ENCODE measurements at regions of chr17 and their contacts with region 1.

Region 1: GRCh38 chr17:50200457-50201275 is 765 bp downstream of the COL1A1 start:
- DNase-seq: peak; percentile 91
- ATAC-seq: peak; percentile 81
- H3K4me3 Mint-ChIP-seq: peak overlapping the region; percentile 53
- H3K27ac Mint-ChIP-seq: no peak overlapping the region
- H3K4me1 Mint-ChIP-seq: peaks cover 16% of the 10 kb centered on the region
- H3K27me3 Mint-ChIP-seq: peaks cover 43% of the 10 kb centered on the region

Region 2: GRCh38 chr17:50114849-50115357 is 85.8 kb before region 1 on chr17:
- CTCF ChIA-PET with region 1: interaction called, 7 read pairs
- POLR2A ChIA-PET with region 1: interaction called, 3 read pairs
- intact Hi-C with region 1: loop called in 1 of 2 experiments (anchors 1 kb)
- DNase-seq: peak; percentile 65
- ATAC-seq: peak; percentile 76
- H3K4me3 Mint-ChIP-seq: no peak overlapping the region
- H3K27ac Mint-ChIP-seq: no peak overlapping the region
- H3K4me1 Mint-ChIP-seq: peaks cover 7% of the 10 kb centered on the region
- H3K27me3 Mint-ChIP-seq: peaks cover 31% of the 10 kb centered on the region

Region 3: DNA sequence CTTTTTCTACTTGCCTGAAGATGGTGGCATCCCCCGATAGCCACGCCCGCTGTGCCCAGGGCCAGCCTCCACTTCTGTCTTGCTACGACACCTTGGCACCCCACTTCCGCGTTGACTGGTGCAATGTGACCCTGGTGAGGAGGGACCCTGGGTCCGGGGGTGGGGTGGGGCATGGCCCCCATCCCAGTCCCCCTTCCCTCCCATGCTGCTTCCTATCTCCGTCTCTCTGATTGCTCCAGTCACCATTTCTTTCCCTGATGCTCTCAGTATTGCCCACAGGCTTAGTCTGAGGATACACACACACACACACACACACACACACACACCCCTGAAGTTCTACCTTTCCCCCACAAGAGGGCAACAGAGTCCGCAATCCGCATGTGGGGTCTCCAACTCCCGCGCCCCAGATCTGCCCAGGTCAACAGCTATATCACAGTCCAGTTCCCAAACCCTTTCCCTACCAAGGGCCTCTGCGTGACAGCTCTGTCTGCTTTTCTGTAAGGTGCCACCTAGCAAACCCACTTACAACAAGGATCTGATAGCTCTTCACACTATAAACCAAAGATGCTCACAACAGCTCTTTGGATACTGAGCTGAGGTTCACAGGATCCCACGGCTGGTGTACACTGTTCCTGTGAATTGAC is 31.4 kb before region 1 on chr17:
- CTCF ChIA-PET with region 1: interaction called, 22 read pairs
- POLR2A ChIA-PET with region 1: no interaction called
- intact Hi-C with region 1: loop called (anchors 1 kb)
- DNase-seq: peak; percentile 66
- ATAC-seq: peak; percentile 77
- H3K4me3 Mint-ChIP-seq: peak overlapping the region; percentile 11
- H3K27ac Mint-ChIP-seq: peak overlapping the region; percentile 11
- H3K4me1 Mint-ChIP-seq: peaks cover 9% of the 10 kb centered on the region
- H3K27me3 Mint-ChIP-seq: no peaks in the 10 kb centered on the region

Region 4: GRCh38 chr17:50269477-50270434 is 69.1 kb after region 1 on chr17:
- CTCF ChIA-PET with region 1: interaction called, 50 read pairs
- POLR2A ChIA-PET with region 1: no interaction called
- intact Hi-C with region 1: loop called (anchors 1 kb)
- DNase-seq: peak; percentile 86
- ATAC-seq: peak; percentile 97
- H3K4me3 Mint-ChIP-seq: no peak overlapping the region
- H3K27ac Mint-ChIP-seq: no peak overlapping the region
- H3K4me1 Mint-ChIP-seq: peaks cover 5% of the 10 kb centered on the region
- H3K27me3 Mint-ChIP-seq: peaks cover 16% of the 10 kb centered on the region

Region 5: GRCh38 chr17:50297407-50297865 is 96.8 kb after region 1 on chr17:
- CTCF ChIA-PET with region 1: interaction called, 200 read pairs
- POLR2A ChIA-PET with region 1: no interaction called
- intact Hi-C with region 1: loop called (anchors 1 kb)
- DNase-seq: peak; percentile 91
- ATAC-seq: peak; percentile 99
- H3K4me3 Mint-ChIP-seq: no peak overlapping the region
- H3K27ac Mint-ChIP-seq: no peak overlapping the region
- H3K4me1 Mint-ChIP-seq: no peaks in the 10 kb centered on the region
- H3K27me3 Mint-ChIP-seq: peaks cover 3% of the 10 kb centered on the region

Region 6: GRCh38 chr17:50331085-50331791 is 130.6 kb after region 1 on chr17:
- CTCF ChIA-PET with region 1: interaction called, 4 read pairs
- POLR2A ChIA-PET with region 1: no interaction called
- intact Hi-C with region 1: loop called in 1 of 2 experiments (anchors 1 kb)
- DNase-seq: no peak
- ATAC-seq: peak; percentile 62
- H3K4me3 Mint-ChIP-seq: no peak overlapping the region
- H3K27ac Mint-ChIP-seq: peak overlapping the region; percentile 42
- H3K4me1 Mint-ChIP-seq: peaks cover 15% of the 10 kb centered on the region
- H3K27me3 Mint-ChIP-seq: peaks cover 5% of the 10 kb centered on the region

Region 7: DNA sequence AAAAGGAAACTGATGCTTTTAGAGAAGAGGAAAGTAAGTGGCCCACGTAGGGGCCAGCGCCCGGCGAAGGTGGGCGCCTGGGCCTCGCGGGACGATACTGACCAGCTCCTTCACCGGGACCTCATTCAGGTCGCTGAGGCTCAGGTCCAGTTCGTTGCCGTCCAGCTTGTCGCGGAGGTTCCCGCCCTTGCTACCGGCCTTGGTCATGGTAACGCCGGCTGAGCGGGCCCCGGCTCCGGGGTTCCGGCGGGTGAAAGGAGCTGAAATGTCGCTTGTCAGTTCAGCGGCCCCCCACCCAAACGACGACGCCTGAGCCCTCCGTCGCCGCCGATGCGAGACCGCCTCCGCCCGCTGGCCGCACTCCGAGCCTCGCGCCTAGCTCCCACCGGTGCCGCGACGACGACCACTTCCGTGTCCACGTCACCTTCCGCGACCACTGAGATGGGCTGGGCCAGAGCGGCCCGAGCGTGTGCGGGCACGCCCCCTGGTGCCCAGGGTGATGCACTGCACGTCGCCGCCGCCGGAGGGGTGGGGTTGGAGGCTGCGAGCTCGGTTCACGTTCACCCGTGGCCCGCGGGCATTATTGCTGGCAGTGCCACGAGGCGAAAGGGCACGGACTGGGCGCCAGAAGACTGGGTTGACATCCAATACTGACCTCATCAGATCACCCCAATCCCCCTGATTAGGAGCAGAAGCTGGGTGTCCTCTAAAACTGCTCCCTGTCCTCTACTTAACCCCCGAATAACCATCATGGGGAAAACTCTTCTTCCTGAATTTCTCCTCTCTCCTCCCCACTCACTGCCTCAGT is 196.6 kb after region 1 on chr17 and contains the start of gene LRRC59:
- CTCF ChIA-PET with region 1: interaction called, 6 read pairs
- POLR2A ChIA-PET with region 1: no interaction called
- intact Hi-C with region 1: loop called in 1 of 2 experiments (anchors 1 kb)
- DNase-seq: peak; percentile 95
- ATAC-seq: peak; percentile 95
- H3K4me3 Mint-ChIP-seq: peak within 1 kb of the TSS; percentile 93
- H3K27ac Mint-ChIP-seq: peak within 1 kb of the TSS; percentile 88
- H3K4me1 Mint-ChIP-seq: peaks cover 33% of the 10 kb centered on the region
- H3K27me3 Mint-ChIP-seq: no peaks in the 10 kb centered on the region
- total RNA-seq, gene LRRC59: 74.4 to 82.7 TPM

Region 8: DNA sequence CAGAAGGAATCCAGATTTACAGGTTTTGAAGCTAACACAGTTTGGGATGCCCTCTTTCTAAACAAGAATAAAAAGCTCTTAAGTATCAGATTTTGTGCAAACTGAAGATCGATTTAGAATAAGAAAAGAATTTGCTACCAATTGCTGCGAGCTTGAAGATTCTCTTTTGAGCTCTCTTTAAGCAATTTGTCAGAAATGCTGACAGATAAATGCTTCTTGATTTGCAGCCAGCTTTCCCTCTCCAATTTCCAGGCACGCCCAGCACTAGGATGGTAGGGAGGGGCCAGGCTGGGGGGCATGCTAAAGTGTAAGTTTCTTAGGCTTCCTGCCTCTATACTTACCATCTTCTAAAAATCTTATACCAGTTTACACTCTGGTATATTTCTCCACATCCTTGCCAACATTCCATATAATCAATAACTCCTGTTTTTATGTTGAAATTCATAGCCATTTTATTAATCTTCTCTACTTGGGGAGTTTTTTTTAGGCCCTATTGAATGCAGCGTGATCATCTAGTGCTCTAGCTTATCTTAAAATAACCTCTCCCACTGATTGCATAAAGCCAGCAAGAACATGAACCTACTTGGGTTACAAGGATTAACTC is 242.8 kb after region 1 on chr17:
- CTCF ChIA-PET with region 1: no interaction called
- POLR2A ChIA-PET with region 1: no interaction called
- intact Hi-C with region 1: no loop called
- DNase-seq: no peak
- ATAC-seq: no peak
- H3K4me3 Mint-ChIP-seq: no peak overlapping the region
- H3K27ac Mint-ChIP-seq: no peak overlapping the region
- H3K4me1 Mint-ChIP-seq: no peaks in the 10 kb centered on the region
- H3K27me3 Mint-ChIP-seq: no peaks in the 10 kb centered on the region